Common myeloid progenitor, CD34-positive (primary cell): ENCODE measurements at regions of chr7 and their contacts with region 1.

Region 1: GRCh38 chr7:6589829-6590644 is at the start of gene INTS15:
- DNase-seq: peak; percentile 84 to 93 (median 90)
- H3K4me3 ChIP-seq: peak within 1 kb of the TSS; percentile 78 to 97 (median 90)
- H3K27ac ChIP-seq: peak within 1 kb of the TSS; percentile 33 to 77
- H3K4me1 ChIP-seq: peaks cover 0 to 16% (median 11%) of the 10 kb centered on the region in 4 experiments
- H3K27me3 ChIP-seq: no peaks in the 10 kb centered on the region

Region 2: GRCh38 chr7:6577365-6578113 is 12.5 kb before region 1 on chr7 and contains the start of gene ZDHHC4:
- CTCF ChIA-PET with region 1: interaction called, 19 read pairs
- POLR2A ChIA-PET with region 1: interaction called, 4 read pairs
- DNase-seq: peak; percentile 95 to 97 (median 96)
- H3K4me3 ChIP-seq: peak within 1 kb of the TSS; percentile 43 to 88 (median 72)
- H3K27ac ChIP-seq: peak within 1 kb of the TSS; percentile 90 to 96
- H3K4me1 ChIP-seq: peaks cover 0 to 15% (median 13%) of the 10 kb centered on the region in 4 experiments
- H3K27me3 ChIP-seq: no peaks in the 10 kb centered on the region